ENCODE measurements at regions of chr22 and their contacts with region 1.

Region 1: DNA sequence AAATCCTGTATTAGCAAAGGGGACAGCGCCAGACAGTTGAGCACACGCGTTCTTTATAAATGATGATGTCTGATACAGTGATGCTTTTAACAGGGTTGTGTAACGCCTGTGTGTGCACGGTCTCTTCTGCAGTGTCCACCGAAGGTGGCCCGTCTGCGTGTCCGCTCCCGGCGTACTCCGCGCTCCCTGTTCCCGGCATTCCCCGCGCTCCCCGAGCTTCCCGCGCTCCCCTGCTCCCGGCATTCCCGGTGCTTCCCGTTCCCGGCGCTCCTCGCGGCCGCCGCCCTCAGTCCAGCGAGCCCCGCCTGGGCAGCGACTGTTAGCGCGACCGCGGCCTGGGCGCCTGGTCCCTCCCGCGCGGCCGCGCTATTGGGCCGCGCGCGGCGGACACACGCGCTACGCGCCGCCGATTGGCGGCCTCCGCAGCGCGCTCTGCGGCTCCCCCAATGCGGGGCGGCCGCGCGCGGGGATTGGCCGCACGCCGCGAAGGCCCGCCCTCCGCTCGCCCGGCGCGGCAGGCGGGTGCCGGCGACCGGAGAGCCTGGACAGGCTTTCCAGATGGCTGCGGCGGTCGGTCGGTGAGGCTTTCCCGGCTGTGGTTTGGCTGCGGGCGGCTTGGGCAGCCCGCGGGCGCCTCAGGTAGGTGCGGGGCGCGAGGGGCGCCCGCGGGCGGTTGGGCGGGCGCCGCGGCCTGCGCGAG is at the start of gene DGCR8:
- DNase-seq: peak; percentile 96 to 97 (median 96)
- ATAC-seq: peak; percentile 95 to 98 (median 96)
- H3K4me3 ChIP-seq: peak within 1 kb of the TSS; percentile 48 to 92 (median 84)
- H3K27ac ChIP-seq: peak within 1 kb of the TSS; percentile 75 to 94 (median 86)
- H3K4me1 ChIP-seq: peaks cover 3 to 49% (median 43%) of the 10 kb centered on the region in 12 donors
- H3K27me3 ChIP-seq: no peaks in the 10 kb centered on the region
- CTCF ChIP-seq: peak in 1 of 12 donors; percentile 19
- POLR2A ChIP-seq: peak in 1 of 2 donors; percentile 74
- total RNA-seq, gene DGCR8: 8.8 to 22.1 (median 13.0) TPM

Region 2: GRCh38 chr22:19986410-19987341 is 93.2 kb before region 1 on chr22:
- intact Hi-C with region 1: loop called in 1 of 10 experiments (anchors 5 kb)
- DNase-seq: peak; percentile 85 to 93 (median 87)
- ATAC-seq: peak; percentile 17 to 87 (median 70)
- H3K4me3 ChIP-seq: peak overlapping the region; percentile 58 to 96 (median 86)
- H3K27ac ChIP-seq: peak overlapping the region; percentile 72 to 98 (median 92)
- H3K4me1 ChIP-seq: peaks cover 4 to 78% (median 50%) of the 10 kb centered on the region in 12 donors
- H3K27me3 ChIP-seq: no peaks in the 10 kb centered on the region
- CTCF ChIP-seq: no peak
- POLR2A ChIP-seq: peak; percentile 93 to 95

Region 3: GRCh38 chr22:20027966-20028854 is 51.7 kb before region 1 on chr22:
- intact Hi-C with region 1: loop called in 6 of 10 experiments (anchors 5 to 10 kb)
- DNase-seq: no peak
- ATAC-seq: no peak
- H3K4me3 ChIP-seq: no peak overlapping the region
- H3K27ac ChIP-seq: peak overlapping the region in 6 of 12 donors; percentile 33 to 68 (median 54)
- H3K4me1 ChIP-seq: peaks cover 13 to 95% (median 55%) of the 10 kb centered on the region in 12 donors
- H3K27me3 ChIP-seq: no peaks in the 10 kb centered on the region
- CTCF ChIP-seq: peak in 4 of 12 donors; percentile 7 to 29 (median 20)
- POLR2A ChIP-seq: no peak

Region 4: DNA sequence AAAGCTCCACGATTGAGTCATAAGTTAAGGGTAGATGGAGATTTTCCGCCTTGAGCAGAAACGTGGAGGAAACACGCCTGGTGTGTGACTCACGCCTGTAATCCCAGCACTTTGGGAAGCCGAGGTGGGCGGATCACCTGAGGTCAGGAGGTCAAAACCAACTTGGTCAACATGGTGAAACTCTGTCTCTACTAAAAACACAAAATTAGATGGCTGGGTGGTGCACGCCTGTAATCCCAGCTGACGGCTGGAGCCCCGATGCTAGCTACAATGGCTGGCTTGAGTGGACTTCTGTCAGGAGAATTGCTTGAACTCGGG is 17.2 kb before region 1 on chr22:
- intact Hi-C with region 1: loop called in 1 of 10 experiments (anchors 2 kb)
- DNase-seq: no peak
- ATAC-seq: no peak
- H3K4me3 ChIP-seq: no peak overlapping the region
- H3K27ac ChIP-seq: no peak overlapping the region
- H3K4me1 ChIP-seq: peaks cover 0 to 13% (median 0%) of the 10 kb centered on the region in 12 donors
- H3K27me3 ChIP-seq: no peaks in the 10 kb centered on the region
- CTCF ChIP-seq: no peak
- POLR2A ChIP-seq: no peak